ENCODE measurements at regions of chr4 and their contacts with region 1.

Region 1: GRCh38 chr4:76758290-76758882 is 139.6 kb downstream of the SOWAHB start:
- DNase-seq: no peak
- H3K4me3 ChIP-seq: no peak overlapping the region
- H3K27ac ChIP-seq: peak overlapping the region; percentile 9
- H3K4me1 ChIP-seq: peaks cover 17% of the 10 kb centered on the region
- H3K27me3 ChIP-seq: no peaks in the 10 kb centered on the region
- CTCF ChIP-seq: peak; percentile 17 to 65 (median 56)
- POLR2A ChIP-seq: no peak

Region 2: DNA sequence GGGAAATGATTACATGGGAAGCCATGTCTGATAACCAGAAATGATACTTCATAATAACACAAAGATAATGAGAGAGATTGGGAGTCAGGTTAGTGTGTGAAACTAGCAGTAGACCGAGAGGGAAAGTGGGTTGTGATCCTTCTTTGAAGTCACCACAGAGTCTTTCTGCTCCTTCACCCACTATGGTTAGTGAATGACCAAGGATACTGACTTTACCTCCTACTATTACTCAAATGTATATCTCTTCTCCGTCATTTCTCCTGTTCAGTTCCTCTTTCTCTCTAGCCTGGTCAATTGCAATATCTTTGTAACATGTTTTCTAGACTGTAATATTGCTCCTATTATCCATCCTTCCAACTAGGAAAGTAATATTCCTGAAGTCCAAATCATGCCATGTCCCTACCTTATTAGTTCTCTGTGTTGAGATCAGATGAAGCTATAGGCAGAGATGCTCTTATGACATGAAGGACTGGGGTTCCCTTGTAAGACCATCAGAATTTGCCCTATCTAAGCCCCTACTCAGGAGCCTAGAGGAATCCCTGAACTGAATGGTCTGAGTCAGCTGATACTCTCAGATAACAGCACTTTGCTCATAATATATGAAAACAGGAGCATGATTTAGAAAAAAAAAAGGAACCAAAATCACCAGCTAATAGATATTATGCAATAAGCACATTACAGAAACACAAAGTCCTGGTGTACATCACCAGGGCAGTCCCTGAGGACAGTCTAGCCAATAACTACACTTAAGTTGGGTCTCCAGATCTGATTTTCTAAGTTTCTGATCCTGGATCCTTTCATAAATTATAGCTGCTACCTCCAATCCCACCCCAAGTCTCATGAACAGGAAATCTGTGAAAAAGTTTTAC is 242.2 kb before region 1 on chr4:
- intact Hi-C with region 1: loop called (anchors 10 kb)
- DNase-seq: no peak
- H3K4me3 ChIP-seq: no peak overlapping the region
- H3K27ac ChIP-seq: no peak overlapping the region
- H3K4me1 ChIP-seq: no peaks in the 10 kb centered on the region
- H3K27me3 ChIP-seq: no peaks in the 10 kb centered on the region
- CTCF ChIP-seq: no peak
- POLR2A ChIP-seq: no peak